ENCODE measurements at regions of chr10 and their contacts with region 1.

Region 1: DNA sequence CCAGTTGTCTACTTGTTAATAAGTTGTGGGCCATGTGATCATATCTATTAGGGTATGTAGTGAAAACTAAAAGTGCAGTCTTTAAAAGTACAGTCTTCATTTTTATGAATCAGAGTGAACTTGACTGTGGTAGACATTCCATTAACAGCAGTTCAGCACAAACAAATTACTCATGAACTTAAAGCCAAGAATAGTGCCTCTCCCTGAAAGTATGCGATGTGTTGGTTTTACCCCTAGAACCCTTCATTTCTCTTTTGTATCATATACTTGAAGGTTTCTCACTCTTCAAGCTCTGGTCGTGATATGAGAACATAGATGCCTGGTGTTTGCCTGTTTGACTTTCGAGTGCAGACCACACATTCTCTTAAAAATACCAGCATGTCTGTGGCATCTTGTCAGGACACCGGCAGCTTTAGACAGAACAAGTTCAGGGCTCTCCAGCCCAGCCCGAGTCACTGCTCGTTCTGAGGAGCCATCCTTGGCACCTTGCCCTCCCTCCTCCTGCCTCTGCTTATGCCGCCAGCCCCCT is 159.3 kb downstream of the LCOR start:
- DNase-seq: no peak
- ATAC-seq: peak; percentile 78
- H3K4me3 ChIP-seq: no peak overlapping the region
- H3K27ac ChIP-seq: no peak overlapping the region
- H3K4me1 ChIP-seq: peaks cover 22% of the 10 kb centered on the region
- H3K27me3 ChIP-seq: no peaks in the 10 kb centered on the region
- CTCF ChIP-seq: no peak
- EP300 ChIP-seq: no peak
- POLR2A ChIP-seq: no peak
- RAD21 ChIP-seq: no peak

Region 2: GRCh38 chr10:96814264-96814663 is 177.1 kb before region 1 on chr10:
- CTCF ChIA-PET with region 1: no interaction called
- POLR2A ChIA-PET with region 1: no interaction called
- RAD21 ChIA-PET with region 1: no interaction called
- SMC1A ChIA-PET with region 1: no interaction called
- in situ Hi-C with region 1: no loop called
- intact Hi-C with region 1: no loop called
- DNase-seq: no peak
- ATAC-seq: no peak
- H3K4me3 ChIP-seq: no peak overlapping the region
- H3K27ac ChIP-seq: no peak overlapping the region
- H3K4me1 ChIP-seq: no peaks in the 10 kb centered on the region
- H3K27me3 ChIP-seq: no peaks in the 10 kb centered on the region
- CTCF ChIP-seq: no peak
- EP300 ChIP-seq: no peak
- POLR2A ChIP-seq: no peak
- RAD21 ChIP-seq: no peak

Region 3: GRCh38 chr10:96910488-96911395 is 80.6 kb before region 1 on chr10:
- CTCF ChIA-PET with region 1: interaction called, 3 read pairs
- POLR2A ChIA-PET with region 1: no interaction called
- RAD21 ChIA-PET with region 1: interaction called, 5 read pairs
- SMC1A ChIA-PET with region 1: interaction called, 11 read pairs
- in situ Hi-C with region 1: no loop called
- intact Hi-C with region 1: no loop called
- DNase-seq: peak; percentile 28
- ATAC-seq: peak; percentile 84
- H3K4me3 ChIP-seq: no peak overlapping the region
- H3K27ac ChIP-seq: peak overlapping the region; percentile 24; the same call in 1 of the 2 replicates
- H3K4me1 ChIP-seq: 0 out of 2 replicates have a peak, but pooled peaks cover 3% of the 10 kb centered on the region
- H3K27me3 ChIP-seq: no peaks in the 10 kb centered on the region
- CTCF ChIP-seq: peak; percentile 65 to 67 (median 66)
- EP300 ChIP-seq: no peak
- POLR2A ChIP-seq: no peak
- RAD21 ChIP-seq: peak; percentile 69

Region 4: DNA sequence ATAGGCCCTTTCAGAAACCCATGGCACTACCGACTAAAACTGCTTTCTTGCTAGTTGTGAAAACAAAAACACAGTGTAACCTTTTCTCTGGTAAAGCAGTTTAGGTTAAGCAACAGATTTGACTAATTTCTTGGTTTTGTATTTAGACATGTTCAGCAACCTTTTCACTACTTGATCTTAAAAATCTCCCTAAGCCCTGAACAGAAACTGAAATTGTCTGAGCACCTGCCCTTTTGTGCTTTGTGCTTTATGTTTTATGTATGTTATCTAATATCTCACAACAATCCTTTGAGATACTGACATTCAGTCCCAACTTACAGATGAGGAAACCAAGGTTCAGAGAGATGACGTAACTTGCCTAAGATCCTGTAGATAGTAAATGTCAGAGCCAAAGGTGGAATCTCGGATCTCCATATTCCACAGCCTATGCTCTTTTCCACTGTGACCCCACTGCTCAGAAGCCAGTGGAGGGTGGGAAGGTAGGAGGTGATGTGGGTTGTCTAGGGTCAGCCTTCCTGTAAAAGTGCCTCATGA is 12.7 kb before region 1 on chr10:
- CTCF ChIA-PET with region 1: interaction called, 25 read pairs
- POLR2A ChIA-PET with region 1: interaction called, 4 read pairs
- RAD21 ChIA-PET with region 1: interaction called, 5 read pairs
- SMC1A ChIA-PET with region 1: interaction called, 25 read pairs
- in situ Hi-C with region 1: no loop called
- intact Hi-C with region 1: no loop called
- DNase-seq: peak; percentile 56
- ATAC-seq: peak; percentile 88
- H3K4me3 ChIP-seq: peak overlapping the region; percentile 13; the same call in 1 of the 2 replicates
- H3K27ac ChIP-seq: peak overlapping the region; percentile 87
- H3K4me1 ChIP-seq: peaks cover 35% of the 10 kb centered on the region
- H3K27me3 ChIP-seq: no peaks in the 10 kb centered on the region
- CTCF ChIP-seq: no peak
- EP300 ChIP-seq: peak in 1 of 2 experiments; percentile 62; a peak in 2 of 4 replicates
- POLR2A ChIP-seq: no peak
- RAD21 ChIP-seq: no peak

Region 5: DNA sequence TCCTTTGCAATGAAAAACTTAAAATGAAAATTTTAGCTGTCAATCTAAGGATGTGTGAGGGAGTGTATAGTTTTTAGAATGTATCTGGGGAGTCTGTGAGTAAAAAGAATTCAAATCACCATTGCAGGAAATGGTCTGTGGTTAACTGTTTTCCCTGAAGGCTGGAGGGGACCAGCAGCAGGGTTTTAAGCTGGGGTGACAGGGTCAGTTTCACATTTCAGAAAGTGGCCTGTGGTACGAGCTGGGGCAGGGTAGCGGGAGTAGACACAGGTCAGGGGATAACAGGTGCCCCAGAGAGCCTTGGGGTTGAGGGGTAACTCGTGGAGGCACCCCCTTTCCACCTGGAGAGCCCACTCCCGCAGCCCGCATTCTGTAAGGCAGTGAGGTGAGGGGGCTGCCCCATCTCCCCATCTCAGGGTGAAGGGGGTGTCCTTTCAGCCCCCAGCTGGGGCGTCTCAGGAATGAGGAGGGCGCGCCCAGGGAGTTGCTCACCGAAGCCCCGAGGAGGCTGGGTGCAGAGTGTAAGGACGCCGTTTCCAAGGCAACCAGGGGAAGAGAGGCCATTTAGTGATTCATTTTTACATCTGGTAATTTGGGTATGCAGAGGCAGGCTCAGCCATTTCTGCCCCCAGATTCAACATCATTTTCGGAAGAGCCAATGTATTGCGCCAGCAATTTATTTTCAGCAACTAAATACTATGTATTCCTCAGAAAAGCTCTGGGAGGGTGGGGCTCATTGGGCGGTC is 25.5 kb after region 1 on chr10:
- CTCF ChIA-PET with region 1: interaction called, 3 read pairs
- POLR2A ChIA-PET with region 1: interaction called, 5 read pairs
- RAD21 ChIA-PET with region 1: interaction called, 6 read pairs
- SMC1A ChIA-PET with region 1: interaction called, 96 read pairs
- in situ Hi-C with region 1: no loop called
- intact Hi-C with region 1: no loop called
- DNase-seq: peak; percentile 65
- ATAC-seq: peak; percentile 92
- H3K4me3 ChIP-seq: peak overlapping the region; percentile 41; the same call in 1 of the 2 replicates
- H3K27ac ChIP-seq: peak overlapping the region; percentile 67
- H3K4me1 ChIP-seq: peaks cover 25% of the 10 kb centered on the region
- H3K27me3 ChIP-seq: no peaks in the 10 kb centered on the region
- CTCF ChIP-seq: no peak
- EP300 ChIP-seq: peak in 1 of 2 experiments; percentile 51; a peak in 1 of 4 replicates
- POLR2A ChIP-seq: no peak
- RAD21 ChIP-seq: no peak

Measured in GM12878 (cell line).